Naive thymus-derived CD4-positive, alpha-beta T cell (primary cell): ENCODE measurements at regions of chrX and their contacts with region 1.

Region 1: GRCh38 chrX:136608295-136609171 is 39.4 kb upstream of the CD40LG start:
- DNase-seq: peak; percentile 18 to 72 (median 56)
- ATAC-seq: peak; percentile 85
- H3K4me3 ChIP-seq: peak overlapping the region; percentile 40
- H3K4me3 Mint-ChIP-seq: peak overlapping the region; percentile 31 to 81 (median 73)
- H3K27ac ChIP-seq: peak overlapping the region; percentile 58
- H3K27ac Mint-ChIP-seq: peak overlapping the region; percentile 62 to 91 (median 85)
- H3K4me1 ChIP-seq: peaks cover 16 to 21% of the 10 kb centered on the region in 2 donors
- H3K4me1 Mint-ChIP-seq: peaks cover 7 to 52% (median 46%) of the 10 kb centered on the region in 7 donors
- H3K27me3 ChIP-seq: no peaks in the 10 kb centered on the region
- H3K27me3 Mint-ChIP-seq: no peaks in the 10 kb centered on the region

Region 2: GRCh38 chrX:136112778-136113177 is 495.8 kb before region 1 on chrX:
- CTCF ChIA-PET with region 1: no interaction called
- POLR2A ChIA-PET with region 1: no interaction called
- intact Hi-C with region 1: no loop called
- DNase-seq: no peak
- ATAC-seq: no peak
- H3K4me3 ChIP-seq: no peak overlapping the region
- H3K4me3 Mint-ChIP-seq: no peak overlapping the region
- H3K27ac ChIP-seq: no peak overlapping the region
- H3K27ac Mint-ChIP-seq: no peak overlapping the region
- H3K4me1 ChIP-seq: no peaks in the 10 kb centered on the region
- H3K4me1 Mint-ChIP-seq: peaks cover 0 to 5% (median 0%) of the 10 kb centered on the region in 7 donors
- H3K27me3 ChIP-seq: no peaks in the 10 kb centered on the region
- H3K27me3 Mint-ChIP-seq: no peaks in the 10 kb centered on the region

Region 3: DNA sequence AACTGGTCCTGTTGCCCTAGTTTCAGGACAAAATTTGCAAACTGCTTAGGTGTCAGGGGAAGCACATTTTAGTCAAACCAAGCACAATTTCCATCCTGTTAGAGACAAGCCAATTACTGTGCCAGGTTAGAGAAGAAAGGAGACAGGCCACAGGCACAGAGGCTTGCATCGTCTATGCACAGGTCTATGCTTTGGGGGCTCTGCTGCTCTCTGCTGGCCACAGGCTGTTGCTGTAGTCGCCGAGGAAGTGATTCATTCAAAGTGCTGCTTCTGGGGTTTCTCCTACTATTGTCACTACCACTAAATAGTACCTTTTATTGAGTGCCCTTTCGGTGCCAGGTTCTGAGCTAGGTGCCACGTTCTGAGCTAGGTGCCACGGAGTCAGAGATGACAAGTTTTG is 31.0 kb before region 1 on chrX:
- CTCF ChIA-PET with region 1: interaction called, 9 read pairs
- POLR2A ChIA-PET with region 1: interaction called, 4 read pairs
- intact Hi-C with region 1: loop called in 1 of 2 experiments (anchors 2 kb)
- DNase-seq: peak; percentile 30 to 74 (median 62)
- ATAC-seq: peak; percentile 99
- H3K4me3 ChIP-seq: no peak overlapping the region
- H3K4me3 Mint-ChIP-seq: peak overlapping the region in 2 of 10 donors; percentile 20 to 63
- H3K27ac ChIP-seq: no peak overlapping the region
- H3K27ac Mint-ChIP-seq: peak overlapping the region in 8 of 9 donors; percentile 10 to 83 (median 67)
- H3K4me1 ChIP-seq: peaks cover 3 to 4% of the 10 kb centered on the region in 2 donors
- H3K4me1 Mint-ChIP-seq: peaks cover 0 to 22% (median 11%) of the 10 kb centered on the region in 7 donors
- H3K27me3 ChIP-seq: no peaks in the 10 kb centered on the region
- H3K27me3 Mint-ChIP-seq: no peaks in the 10 kb centered on the region

Region 4: DNA sequence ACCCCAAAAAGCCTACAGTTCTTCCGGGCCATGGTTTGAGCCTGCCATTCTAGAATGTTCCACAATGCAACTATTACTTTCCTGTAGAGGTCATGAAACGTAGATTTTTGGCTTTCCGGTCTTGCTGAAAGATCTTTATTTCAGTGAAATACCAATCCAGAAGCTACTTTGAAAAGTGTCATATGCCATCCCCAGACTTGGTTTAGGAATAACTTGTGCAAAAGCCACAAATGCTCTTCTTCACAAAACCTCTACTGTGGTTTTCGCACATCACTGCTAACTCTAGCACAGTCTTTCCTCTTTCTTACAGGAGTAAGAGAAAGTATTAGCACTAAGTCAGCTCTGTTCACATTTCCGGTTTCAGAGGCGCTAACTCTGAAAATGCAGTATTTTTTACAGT is 26.7 kb after region 1 on chrX:
- CTCF ChIA-PET with region 1: interaction called, 12 read pairs
- POLR2A ChIA-PET with region 1: interaction called, 6 read pairs
- intact Hi-C with region 1: no loop called
- DNase-seq: peak in 5 of 9 donors; percentile 49 to 68 (median 60)
- ATAC-seq: peak; percentile 80
- H3K4me3 ChIP-seq: peak overlapping the region; percentile 36
- H3K4me3 Mint-ChIP-seq: peak overlapping the region; percentile 68 to 84 (median 78)
- H3K27ac ChIP-seq: peak overlapping the region; percentile 53
- H3K27ac Mint-ChIP-seq: peak overlapping the region; percentile 80 to 94 (median 89)
- H3K4me1 ChIP-seq: peaks cover 62 to 88% of the 10 kb centered on the region in 2 donors
- H3K4me1 Mint-ChIP-seq: peaks cover 30 to 96% (median 83%) of the 10 kb centered on the region in 7 donors
- H3K27me3 ChIP-seq: no peaks in the 10 kb centered on the region
- H3K27me3 Mint-ChIP-seq: no peaks in the 10 kb centered on the region

Region 5: DNA sequence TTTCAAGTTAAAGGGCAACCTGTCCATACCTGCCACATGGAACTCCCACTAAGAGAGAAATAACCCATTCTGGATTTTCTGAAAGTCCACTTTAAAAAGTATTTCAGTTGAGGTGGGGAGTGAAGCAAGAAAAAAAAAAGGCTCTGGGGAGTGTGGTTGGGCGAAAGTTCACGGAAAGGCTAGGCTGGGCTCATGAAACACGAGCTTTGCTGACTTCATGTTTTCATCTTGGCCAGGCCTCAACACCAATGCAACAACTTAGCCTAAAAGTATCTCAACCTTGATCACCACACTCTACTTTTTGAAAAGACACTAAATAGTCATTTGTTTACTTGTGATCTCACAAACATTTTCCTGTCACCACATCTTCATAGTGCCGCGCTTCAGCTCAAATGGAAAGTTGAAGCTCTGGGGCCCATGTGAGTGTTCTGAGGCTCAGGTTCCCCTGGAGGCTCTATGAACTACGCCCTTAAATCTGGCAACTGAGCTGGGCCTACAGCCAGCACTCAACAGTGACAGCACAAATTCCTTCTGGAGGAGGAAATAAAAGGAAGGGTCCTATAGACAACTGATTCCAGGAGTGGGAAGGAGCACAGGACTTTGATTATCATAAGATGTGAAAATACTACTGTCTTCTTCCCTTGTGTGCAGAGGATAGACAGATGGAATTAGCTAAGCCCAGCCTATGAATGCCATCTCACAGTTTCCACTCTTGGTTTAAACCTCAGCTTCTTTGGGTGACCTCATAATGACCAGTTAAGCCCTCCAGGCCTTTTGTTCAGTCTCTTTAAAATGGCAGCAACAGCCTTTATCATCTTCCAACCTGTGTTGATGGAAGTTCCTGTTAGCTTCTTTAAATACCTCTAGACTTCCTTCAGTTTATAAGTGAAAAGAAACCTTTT is 44.5 kb after region 1 on chrX:
- CTCF ChIA-PET with region 1: interaction called, 13 read pairs
- POLR2A ChIA-PET with region 1: interaction called, 38 read pairs
- intact Hi-C with region 1: loop called (anchors 1 kb)
- DNase-seq: peak in 2 of 9 donors; percentile 39 to 55
- ATAC-seq: peak; percentile 42
- H3K4me3 ChIP-seq: peak overlapping the region; percentile 94
- H3K4me3 Mint-ChIP-seq: peak overlapping the region; percentile 79 to 99 (median 96)
- H3K27ac ChIP-seq: peak overlapping the region; percentile 79
- H3K27ac Mint-ChIP-seq: peak overlapping the region; percentile 85 to 99 (median 95)
- H3K4me1 ChIP-seq: peaks cover 14 to 30% of the 10 kb centered on the region in 2 donors
- H3K4me1 Mint-ChIP-seq: peaks cover 12 to 57% (median 42%) of the 10 kb centered on the region in 7 donors
- H3K27me3 ChIP-seq: peaks cover 0 to 3% of the 10 kb centered on the region in 2 donors
- H3K27me3 Mint-ChIP-seq: no peaks in the 10 kb centered on the region

Region 6: GRCh38 chrX:136711147-136711546 is 102.6 kb after region 1 on chrX:
- CTCF ChIA-PET with region 1: interaction called, 21 read pairs
- POLR2A ChIA-PET with region 1: no interaction called
- intact Hi-C with region 1: loop called in 1 of 2 experiments (anchors 1 kb)
- DNase-seq: no peak
- ATAC-seq: no peak
- H3K4me3 ChIP-seq: no peak overlapping the region
- H3K4me3 Mint-ChIP-seq: peak overlapping the region in 2 of 10 donors; percentile 8 to 18
- H3K27ac ChIP-seq: peak overlapping the region; percentile 68
- H3K27ac Mint-ChIP-seq: peak overlapping the region; percentile 6 to 95 (median 84)
- H3K4me1 ChIP-seq: peaks cover 5 to 10% of the 10 kb centered on the region in 2 donors
- H3K4me1 Mint-ChIP-seq: peaks cover 0 to 50% (median 46%) of the 10 kb centered on the region in 7 donors
- H3K27me3 ChIP-seq: no peaks in the 10 kb centered on the region
- H3K27me3 Mint-ChIP-seq: no peaks in the 10 kb centered on the region